ENCODE measurements at regions of chr10 and their contacts with region 1.

Region 1: DNA sequence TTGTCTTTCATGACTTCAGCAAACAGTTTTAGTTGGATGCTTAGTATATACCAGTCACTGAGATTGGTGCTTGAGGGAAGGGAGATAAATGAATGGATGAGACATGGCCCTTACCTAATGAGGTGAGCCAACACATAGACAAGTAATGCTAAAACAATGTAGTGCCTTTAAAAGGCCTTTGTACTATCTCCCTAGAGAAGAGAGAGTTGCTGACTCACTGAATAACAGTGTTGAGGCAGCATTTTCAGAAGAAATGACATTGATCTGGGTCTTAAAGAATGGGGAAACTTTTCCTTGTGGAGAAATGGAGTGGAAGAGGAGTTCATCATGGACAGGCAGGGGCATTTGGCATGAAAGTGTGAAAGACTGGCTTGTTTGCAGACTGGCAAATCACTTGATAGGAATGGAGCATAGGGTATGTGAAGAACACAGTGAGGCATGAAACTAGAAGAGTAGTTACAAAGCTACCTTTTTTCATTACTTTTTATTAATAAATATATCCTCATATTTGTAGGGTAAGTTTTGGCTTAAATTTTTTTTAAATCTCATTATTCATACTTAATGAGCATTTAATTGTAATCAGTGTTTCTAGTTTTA is 91.2 kb downstream of the KAT6B start:
- DNase-seq: peak; percentile 83
- ATAC-seq: peak; percentile 71
- H3K4me3 ChIP-seq: no peak overlapping the region
- H3K27ac ChIP-seq: peak overlapping the region; percentile 92
- H3K4me1 ChIP-seq: peaks cover 12% of the 10 kb centered on the region
- H3K27me3 ChIP-seq: no peaks in the 10 kb centered on the region
- CTCF ChIP-seq: no peak
- POLR2A ChIP-seq: no peak
- RAD21 ChIP-seq: no peak

Region 2: DNA sequence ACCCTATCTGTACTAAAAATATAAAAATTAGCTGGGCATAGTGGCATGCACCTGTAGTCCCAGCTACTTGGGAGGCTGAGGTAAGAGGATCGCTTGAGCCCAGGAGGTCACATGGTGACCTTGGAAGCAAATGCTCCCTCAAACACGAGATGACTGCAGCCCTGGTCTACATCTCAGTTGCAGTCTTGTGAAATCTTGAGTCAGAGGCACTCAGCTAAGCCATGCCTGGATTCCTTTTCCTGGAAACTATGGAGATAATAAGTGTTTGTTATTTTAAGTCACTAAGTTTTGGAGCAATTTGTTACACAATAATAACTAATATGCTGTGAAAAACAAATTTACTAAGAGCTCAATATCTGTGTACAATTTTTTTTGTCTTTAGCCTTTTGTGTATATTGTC is 375.5 kb before region 1 on chr10:
- CTCF ChIA-PET with region 1: no interaction called
- POLR2A ChIA-PET with region 1: no interaction called
- dilution Hi-C with region 1: no loop called
- in situ Hi-C with region 1: no loop called
- intact Hi-C with region 1: loop called (anchors 10 kb)
- DNase-seq: peak; percentile 93
- ATAC-seq: peak; percentile 91
- H3K4me3 ChIP-seq: no peak overlapping the region
- H3K27ac ChIP-seq: peak overlapping the region; percentile 58; the same call in 1 of the 2 replicates
- H3K4me1 ChIP-seq: peaks cover 7% of the 10 kb centered on the region; the same call in 1 of the 2 replicates
- H3K27me3 ChIP-seq: no peaks in the 10 kb centered on the region
- CTCF ChIP-seq: no peak
- POLR2A ChIP-seq: no peak
- RAD21 ChIP-seq: no peak

Region 3: DNA sequence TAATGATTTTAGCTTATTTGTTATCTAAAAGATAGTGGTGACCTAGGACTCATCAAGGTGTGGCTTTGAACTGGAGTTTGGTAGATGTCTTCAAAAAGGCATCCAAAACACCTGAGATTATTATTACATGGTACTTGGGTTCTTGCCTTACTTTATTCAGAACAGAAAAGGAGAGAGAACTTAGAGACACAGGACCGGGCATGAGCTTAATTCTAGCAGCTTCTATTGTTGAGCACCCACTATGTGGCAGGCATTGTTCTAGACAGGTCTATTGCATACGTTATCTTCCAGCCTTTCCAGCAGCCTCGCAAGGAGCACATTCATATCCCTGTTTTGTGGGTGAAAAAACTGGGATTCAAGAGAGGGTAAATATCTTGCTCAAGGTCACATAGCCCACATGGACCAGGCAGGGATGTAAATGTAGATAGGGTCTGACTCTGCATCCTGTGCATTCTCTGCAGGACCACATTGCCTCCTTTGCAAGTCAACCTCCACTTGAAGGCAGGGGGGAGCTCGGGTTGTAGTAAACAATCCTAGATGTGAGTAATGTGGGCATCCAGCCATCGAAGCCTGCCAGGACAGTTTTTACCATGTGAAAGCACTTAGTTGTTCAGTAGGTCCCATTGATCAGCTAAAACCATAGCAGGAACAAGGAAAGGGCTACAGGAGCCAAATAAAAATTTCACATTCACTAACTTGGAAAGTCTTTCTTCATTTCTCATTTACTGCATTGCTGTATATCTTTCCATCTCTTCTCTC is 1065.2 kb after region 1 on chr10:
- CTCF ChIA-PET with region 1: no interaction called
- POLR2A ChIA-PET with region 1: no interaction called
- dilution Hi-C with region 1: no loop called
- in situ Hi-C with region 1: no loop called
- intact Hi-C with region 1: no loop called
- DNase-seq: peak; percentile 6
- ATAC-seq: no peak
- H3K4me3 ChIP-seq: no peak overlapping the region
- H3K27ac ChIP-seq: no peak overlapping the region
- H3K4me1 ChIP-seq: no peaks in the 10 kb centered on the region
- H3K27me3 ChIP-seq: peaks cover 4% of the 10 kb centered on the region; the same call in 1 of the 2 replicates
- CTCF ChIP-seq: no peak
- POLR2A ChIP-seq: no peak
- RAD21 ChIP-seq: no peak